SK-N-SH (cell line): ENCODE measurements at regions of chr10 and their contacts with region 1.

Region 1: GRCh38 chr10:97676770-97677581 is 10.1 kb downstream of the AVPI1 start:
- DNase-seq: peak; percentile 82
- H3K4me3 ChIP-seq: no peak overlapping the region; a peak in 1 of 4 replicates
- H3K27ac ChIP-seq: no peak overlapping the region; a peak in 1 of 4 replicates
- H3K4me1 ChIP-seq: peaks cover 1 to 6% of the 10 kb centered on the region in 2 experiments; a peak in 1 of 4 replicates
- H3K27me3 ChIP-seq: no peaks in the 10 kb centered on the region
- CTCF ChIP-seq: peak; percentile 82
- EP300 ChIP-seq: no peak
- RAD21 ChIP-seq: peak; percentile 85

Region 2: GRCh38 chr10:97664282-97664850 is 12.6 kb before region 1 on chr10:
- CTCF ChIA-PET with region 1: interaction called, 71 read pairs
- POLR2A ChIA-PET with region 1: interaction called, 3 read pairs
- DNase-seq: no peak
- H3K4me3 ChIP-seq: no peak overlapping the region
- H3K27ac ChIP-seq: no peak overlapping the region
- H3K4me1 ChIP-seq: peaks cover 0 to 5% of the 10 kb centered on the region in 2 experiments; a peak in 2 of 4 replicates
- H3K27me3 ChIP-seq: no peaks in the 10 kb centered on the region
- CTCF ChIP-seq: no peak
- EP300 ChIP-seq: no peak
- RAD21 ChIP-seq: no peak

Region 3: GRCh38 chr10:97686962-97687784 is 10.2 kb after region 1 on chr10 and contains the start of gene AVPI1:
- CTCF ChIA-PET with region 1: interaction called, 60 read pairs
- POLR2A ChIA-PET with region 1: interaction called, 4 read pairs
- DNase-seq: peak; percentile 98
- H3K4me3 ChIP-seq: peak within 1 kb of the TSS; percentile 76 to 82
- H3K27ac ChIP-seq: peak within 1 kb of the TSS; percentile 65 to 70
- H3K4me1 ChIP-seq: peaks cover 28 to 33% of the 10 kb centered on the region in 2 experiments; a peak in 3 of 4 replicates
- H3K27me3 ChIP-seq: no peaks in the 10 kb centered on the region
- CTCF ChIP-seq: no peak
- EP300 ChIP-seq: peak; percentile 41 to 50; a peak in 2 of 4 replicates
- RAD21 ChIP-seq: no peak
- polyA plus RNA-seq, gene AVPI1: 6.3 and 7.0 TPM in 2 replicates

Region 4: GRCh38 chr10:97701438-97702069 is 24.6 kb after region 1 on chr10:
- CTCF ChIA-PET with region 1: interaction called, 42 read pairs
- POLR2A ChIA-PET with region 1: no interaction called
- DNase-seq: peak; percentile 78
- H3K4me3 ChIP-seq: no peak overlapping the region; a peak in 1 of 4 replicates
- H3K27ac ChIP-seq: no peak overlapping the region
- H3K4me1 ChIP-seq: no peaks in the 10 kb centered on the region
- H3K27me3 ChIP-seq: no peaks in the 10 kb centered on the region
- CTCF ChIP-seq: peak; percentile 86
- EP300 ChIP-seq: no peak
- RAD21 ChIP-seq: peak; percentile 88

Region 5: DNA sequence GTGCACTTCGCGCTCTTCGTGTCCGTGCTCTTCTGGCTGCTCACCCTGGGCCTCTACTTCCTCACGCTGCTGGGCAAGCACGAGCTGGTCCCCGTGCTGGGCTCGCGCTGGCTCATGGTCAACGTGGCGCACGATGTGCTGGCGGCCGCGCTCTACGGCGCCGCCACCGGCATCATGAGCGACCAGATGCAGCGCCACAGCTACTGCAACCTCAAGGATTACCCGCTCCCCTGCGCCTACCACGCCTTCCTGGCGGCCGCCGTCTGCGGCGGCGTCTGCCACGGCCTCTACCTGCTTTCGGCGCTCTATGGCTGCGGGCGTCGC is 37.0 kb after region 1 on chr10:
- CTCF ChIA-PET with region 1: interaction called, 23 read pairs
- POLR2A ChIA-PET with region 1: interaction called, 3 read pairs
- DNase-seq: no peak
- H3K4me3 ChIP-seq: peak overlapping the region; percentile 64 to 71
- H3K27ac ChIP-seq: peak overlapping the region; percentile 64 to 84
- H3K4me1 ChIP-seq: peaks cover 19 to 27% of the 10 kb centered on the region in 2 experiments; a peak in 3 of 4 replicates
- H3K27me3 ChIP-seq: no peaks in the 10 kb centered on the region
- CTCF ChIP-seq: peak; percentile 29; the same call in 1 of the 2 replicates
- EP300 ChIP-seq: no peak
- RAD21 ChIP-seq: no peak

Region 6: GRCh38 chr10:97731346-97732051 is 54.5 kb after region 1 on chr10:
- CTCF ChIA-PET with region 1: interaction called, 42 read pairs
- POLR2A ChIA-PET with region 1: interaction called, 4 read pairs
- DNase-seq: peak; percentile 70
- H3K4me3 ChIP-seq: peak overlapping the region in 1 of 2 experiments; percentile 10; a peak in 1 of 4 replicates
- H3K27ac ChIP-seq: no peak overlapping the region
- H3K4me1 ChIP-seq: peaks cover 0 to under 1% of the 10 kb centered on the region in 2 experiments; a peak in 1 of 4 replicates
- H3K27me3 ChIP-seq: no peaks in the 10 kb centered on the region
- CTCF ChIP-seq: peak; percentile 88
- EP300 ChIP-seq: no peak
- RAD21 ChIP-seq: peak; percentile 99

Region 7: DNA sequence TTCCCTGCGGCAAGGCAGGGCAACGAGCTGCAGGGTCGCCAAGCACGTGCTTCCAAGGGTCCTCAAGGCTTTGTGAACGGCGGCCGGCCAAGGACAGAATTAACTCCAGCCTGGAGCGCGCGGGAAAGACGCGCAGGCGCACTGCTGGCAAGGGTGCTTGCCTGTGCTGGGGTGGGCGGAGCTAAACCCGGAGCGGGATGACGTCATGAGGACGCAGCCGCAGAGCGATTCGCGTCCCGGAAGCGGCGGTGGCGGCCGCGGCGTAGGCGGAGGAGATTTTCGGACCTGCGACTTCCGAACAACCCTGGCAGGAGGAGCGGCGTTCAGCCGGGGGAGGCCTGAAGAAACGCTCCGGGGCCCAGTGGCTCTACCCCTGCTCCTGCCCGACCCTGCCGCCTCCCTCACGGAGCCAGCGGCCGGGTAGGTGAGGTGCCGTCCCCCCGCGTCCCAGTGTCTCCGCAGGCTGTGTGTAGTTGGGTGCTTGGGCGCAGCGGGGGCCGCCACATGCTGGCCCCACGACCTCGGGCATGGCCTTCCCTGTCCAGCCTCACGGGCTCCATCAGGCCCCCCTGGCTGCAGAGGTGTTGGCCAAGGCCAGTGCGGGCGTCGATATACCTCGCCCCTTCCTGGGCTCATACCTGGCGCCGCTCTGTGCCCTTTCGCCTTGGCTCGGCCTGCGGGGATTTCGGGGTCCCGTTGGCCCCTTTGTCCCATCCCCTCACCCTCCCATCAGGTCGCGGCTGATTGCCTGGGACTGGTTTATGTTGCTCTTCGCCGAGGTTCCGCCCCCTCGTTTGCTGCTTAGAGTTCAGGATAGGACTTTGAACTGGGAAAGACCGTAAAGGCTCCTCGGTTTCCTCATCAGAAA is 60.2 kb after region 1 on chr10 and contains the start of gene ZFYVE27:
- CTCF ChIA-PET with region 1: interaction called, 42 read pairs
- POLR2A ChIA-PET with region 1: interaction called, 4 read pairs
- DNase-seq: peak; percentile 99
- H3K4me3 ChIP-seq: peak within 1 kb of the TSS; percentile 89 to 94
- H3K27ac ChIP-seq: peak within 1 kb of the TSS; percentile 74 to 84
- H3K4me1 ChIP-seq: peaks cover 0 to 15% of the 10 kb centered on the region in 2 experiments; a peak in 2 of 4 replicates
- H3K27me3 ChIP-seq: no peaks in the 10 kb centered on the region
- CTCF ChIP-seq: no peak
- EP300 ChIP-seq: 0 out of 4 replicates have a peak, but pooled peaks of 1 of the 2 experiments have one; percentile 30
- RAD21 ChIP-seq: no peak
- polyA plus RNA-seq, gene ZFYVE27: 30.5 and 44.3 TPM in 2 replicates

Region 8: DNA sequence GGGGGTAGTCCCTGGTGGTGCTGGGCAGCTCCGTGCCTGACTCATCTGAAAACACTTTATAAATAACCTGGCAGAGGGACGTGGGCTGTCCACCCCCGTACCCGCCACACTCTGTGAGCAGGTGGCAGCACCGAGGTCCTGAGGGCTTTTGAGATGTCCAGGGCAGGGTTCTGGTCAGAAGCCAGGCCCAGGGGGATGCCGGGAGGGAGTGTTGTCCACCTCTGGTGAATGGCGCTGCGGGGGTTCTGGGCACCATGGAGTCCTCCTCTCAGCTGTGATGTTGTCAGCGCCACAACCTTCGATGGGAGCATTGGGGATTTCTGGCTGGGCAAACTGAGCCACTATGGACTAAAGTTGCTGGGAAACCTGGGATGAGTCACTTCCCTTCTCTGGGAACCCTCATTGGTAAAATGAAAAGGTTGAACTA is 145.3 kb after region 1 on chr10:
- CTCF ChIA-PET with region 1: no interaction called
- POLR2A ChIA-PET with region 1: no interaction called
- DNase-seq: no peak
- H3K4me3 ChIP-seq: no peak overlapping the region
- H3K27ac ChIP-seq: no peak overlapping the region
- H3K4me1 ChIP-seq: peaks cover 0 to 4% of the 10 kb centered on the region in 2 experiments; a peak in 1 of 4 replicates
- H3K27me3 ChIP-seq: peaks cover 13% of the 10 kb centered on the region
- CTCF ChIP-seq: no peak
- EP300 ChIP-seq: no peak
- RAD21 ChIP-seq: no peak